Tibial artery (tissue), 4 donors: ENCODE measurements at regions of chr10 and their contacts with region 1.

Region 1: GRCh38 chr10:105857268-105858264 is 1216.5 kb downstream of the SORCS3 start:
- DNase-seq: no peak
- H3K4me3 ChIP-seq: no peak overlapping the region
- H3K27ac ChIP-seq: no peak overlapping the region
- H3K4me1 ChIP-seq: no peaks in the 10 kb centered on the region
- H3K27me3 ChIP-seq: no peaks in the 10 kb centered on the region
- CTCF ChIP-seq: no peak

Region 2: DNA sequence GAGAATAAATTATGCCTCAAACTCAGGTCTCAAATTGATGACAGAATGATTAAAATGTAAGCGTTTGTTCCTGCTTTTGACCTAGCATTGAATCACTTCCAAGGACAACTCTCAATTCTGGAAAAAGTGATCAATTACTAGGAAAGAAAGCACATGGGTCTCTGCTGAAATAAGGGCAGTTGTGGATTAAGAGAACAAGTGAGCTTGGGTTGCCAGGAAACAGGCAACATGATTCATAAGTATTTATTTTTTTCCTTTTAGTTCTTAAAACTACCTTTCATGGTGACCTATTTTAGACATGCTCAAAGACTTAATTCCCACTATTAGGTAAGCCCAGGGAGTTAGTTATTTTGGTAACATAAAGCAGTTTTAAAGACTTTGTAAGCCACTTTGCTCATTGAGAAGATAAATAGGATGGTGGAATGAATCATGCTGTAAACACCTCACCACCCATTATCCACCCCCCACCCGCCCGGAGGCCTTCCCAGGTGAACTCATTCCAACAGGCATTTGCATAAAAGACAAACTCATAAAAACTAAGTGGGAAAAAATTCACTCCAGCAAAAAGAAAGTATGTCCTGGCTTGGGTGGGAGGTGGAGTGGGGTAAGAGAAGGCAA is 578.7 kb after region 1 on chr10:
- intact Hi-C with region 1: loop called (anchors 5 kb)
- DNase-seq: no peak
- H3K4me3 ChIP-seq: no peak overlapping the region
- H3K27ac ChIP-seq: no peak overlapping the region
- H3K4me1 ChIP-seq: no peaks in the 10 kb centered on the region
- H3K27me3 ChIP-seq: no peaks in the 10 kb centered on the region
- CTCF ChIP-seq: no peak